CD4-positive, alpha-beta memory T cell (primary cell): ENCODE measurements at regions of chr19 and their contacts with region 1.

Region 1: GRCh38 chr19:35899547-35900214 is 659 bp downstream of the NFKBID start:
- DNase-seq: peak; percentile 86 to 94 (median 88)
- H3K4me3 ChIP-seq: peak overlapping the region; percentile 52 to 96
- H3K4me3 Mint-ChIP-seq: peak overlapping the region; percentile 94 to 100 (median 98)
- H3K27ac ChIP-seq: peak overlapping the region; percentile 100
- H3K27ac Mint-ChIP-seq: peak overlapping the region; percentile 92 to 99 (median 98)
- H3K4me1 ChIP-seq: peaks cover 67% of the 10 kb centered on the region
- H3K4me1 Mint-ChIP-seq: peaks cover 23 to 73% (median 53%) of the 10 kb centered on the region in 4 donors
- H3K27me3 ChIP-seq: no peaks in the 10 kb centered on the region
- H3K27me3 Mint-ChIP-seq: no peaks in the 10 kb centered on the region

Region 2: DNA sequence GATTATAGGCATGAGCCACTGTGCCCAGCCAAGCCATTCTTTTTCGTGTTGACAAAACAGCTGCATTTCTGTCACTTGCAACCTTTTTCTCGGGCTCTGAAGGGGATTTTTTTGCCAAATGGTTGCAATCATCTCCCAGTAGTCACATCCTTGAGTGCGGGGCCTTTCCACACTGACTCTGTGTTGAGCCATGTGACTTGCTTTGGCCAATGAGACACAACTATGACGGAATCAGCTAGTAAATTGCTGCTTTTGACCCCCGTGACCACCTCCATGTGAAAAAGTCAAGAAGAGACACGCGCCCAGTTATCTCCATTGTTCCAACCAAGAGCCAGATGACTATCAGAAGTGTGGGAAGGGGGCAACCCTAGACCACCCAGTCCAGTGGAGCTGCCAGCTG is 65.7 kb before region 1 on chr19:
- CTCF ChIA-PET with region 1: no interaction called
- POLR2A ChIA-PET with region 1: no interaction called
- intact Hi-C with region 1: no loop called
- DNase-seq: no peak
- H3K4me3 ChIP-seq: no peak overlapping the region
- H3K4me3 Mint-ChIP-seq: no peak overlapping the region
- H3K27ac ChIP-seq: no peak overlapping the region
- H3K27ac Mint-ChIP-seq: no peak overlapping the region
- H3K4me1 ChIP-seq: no peaks in the 10 kb centered on the region
- H3K4me1 Mint-ChIP-seq: no peaks in the 10 kb centered on the region
- H3K27me3 ChIP-seq: peaks cover 2% of the 10 kb centered on the region
- H3K27me3 Mint-ChIP-seq: peaks cover 19 to 24% of the 10 kb centered on the region in 2 donors

Region 3: DNA sequence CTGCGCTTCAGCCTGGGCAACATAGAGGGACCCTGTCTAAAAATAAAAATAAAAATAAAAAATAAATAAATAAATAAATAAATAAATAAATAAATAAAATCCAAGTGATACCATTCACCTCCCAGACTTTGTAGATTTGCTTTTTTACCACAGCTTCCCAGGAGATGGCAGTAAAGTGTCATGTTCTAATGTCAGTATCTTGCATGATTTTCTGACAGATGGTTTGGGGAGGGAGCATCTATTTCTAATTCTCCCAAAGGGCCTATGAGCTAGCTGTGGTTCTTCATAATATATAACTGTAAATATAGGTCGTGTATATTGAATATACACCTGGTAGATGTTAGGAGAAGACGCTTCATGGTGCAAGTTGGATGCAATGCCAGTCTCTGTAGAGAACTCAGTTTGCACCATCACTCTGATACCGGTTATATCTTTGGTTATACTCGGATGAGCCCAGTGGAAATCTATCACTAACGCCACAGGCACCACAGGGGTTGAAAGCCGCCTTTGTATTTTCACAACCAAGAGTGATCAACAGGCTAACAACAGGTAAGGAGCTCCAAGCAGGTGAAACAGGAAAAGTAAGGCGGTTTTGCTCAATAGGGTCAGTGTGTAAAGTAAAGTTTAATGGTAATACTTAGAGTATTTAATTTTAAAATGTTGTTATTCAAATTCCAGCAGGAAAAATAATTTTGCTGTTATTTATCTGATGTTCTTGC is 17.4 kb before region 1 on chr19:
- CTCF ChIA-PET with region 1: interaction called, 18 read pairs
- POLR2A ChIA-PET with region 1: interaction called, 28 read pairs
- intact Hi-C with region 1: loop called (anchors 1 kb)
- DNase-seq: peak; percentile 71 to 75 (median 72)
- H3K4me3 ChIP-seq: no peak overlapping the region
- H3K4me3 Mint-ChIP-seq: no peak overlapping the region
- H3K27ac ChIP-seq: no peak overlapping the region
- H3K27ac Mint-ChIP-seq: peak overlapping the region in 2 of 7 donors; percentile 57 to 72
- H3K4me1 ChIP-seq: peaks cover 13% of the 10 kb centered on the region
- H3K4me1 Mint-ChIP-seq: peaks cover 8 to 19% (median 9%) of the 10 kb centered on the region in 4 donors
- H3K27me3 ChIP-seq: peaks cover 14% of the 10 kb centered on the region
- H3K27me3 Mint-ChIP-seq: peaks cover 7 to 15% of the 10 kb centered on the region in 2 donors

Region 4: DNA sequence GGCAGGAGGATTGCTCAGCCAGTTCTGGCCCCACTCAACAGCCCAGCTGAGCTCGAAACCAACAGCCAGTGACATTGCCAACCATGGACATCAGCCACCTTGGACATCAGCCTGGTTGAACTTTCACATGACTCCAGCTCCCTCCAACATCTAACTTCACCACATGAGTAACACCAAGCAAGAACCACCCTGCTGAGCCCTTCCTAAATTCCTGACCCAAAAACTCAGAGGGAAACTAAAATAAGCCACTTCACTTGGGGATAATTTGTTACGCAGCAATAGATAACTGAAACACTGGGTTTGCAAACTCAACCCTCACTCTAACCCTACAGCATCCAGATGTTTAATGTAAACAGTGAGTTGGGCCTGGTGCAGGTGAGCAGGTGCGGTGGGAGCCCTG is 25.8 kb after region 1 on chr19:
- CTCF ChIA-PET with region 1: interaction called, 14 read pairs
- POLR2A ChIA-PET with region 1: interaction called, 73 read pairs
- intact Hi-C with region 1: no loop called
- DNase-seq: no peak
- H3K4me3 ChIP-seq: no peak overlapping the region
- H3K4me3 Mint-ChIP-seq: no peak overlapping the region
- H3K27ac ChIP-seq: no peak overlapping the region
- H3K27ac Mint-ChIP-seq: peak overlapping the region in 1 of 7 donors; percentile 32
- H3K4me1 ChIP-seq: peaks cover 22% of the 10 kb centered on the region
- H3K4me1 Mint-ChIP-seq: peaks cover 13 to 32% (median 18%) of the 10 kb centered on the region in 4 donors
- H3K27me3 ChIP-seq: no peaks in the 10 kb centered on the region
- H3K27me3 Mint-ChIP-seq: no peaks in the 10 kb centered on the region

Region 5: GRCh38 chr19:35931161-35931873 is 31.6 kb after region 1 on chr19:
- CTCF ChIA-PET with region 1: interaction called, 14 read pairs
- POLR2A ChIA-PET with region 1: interaction called, 73 read pairs
- intact Hi-C with region 1: loop called (anchors 1 kb)
- DNase-seq: peak; percentile 99 to 100 (median 100)
- H3K4me3 ChIP-seq: peak overlapping the region in 1 of 2 donors; percentile 49
- H3K4me3 Mint-ChIP-seq: peak overlapping the region; percentile 76 to 85 (median 80)
- H3K27ac ChIP-seq: peak overlapping the region; percentile 54
- H3K27ac Mint-ChIP-seq: peak overlapping the region; percentile 86 to 97 (median 95)
- H3K4me1 ChIP-seq: peaks cover 47% of the 10 kb centered on the region
- H3K4me1 Mint-ChIP-seq: peaks cover 27 to 62% (median 38%) of the 10 kb centered on the region in 4 donors
- H3K27me3 ChIP-seq: no peaks in the 10 kb centered on the region
- H3K27me3 Mint-ChIP-seq: no peaks in the 10 kb centered on the region

Region 6: GRCh38 chr19:35949131-35949530 is 49.5 kb after region 1 on chr19:
- CTCF ChIA-PET with region 1: no interaction called
- POLR2A ChIA-PET with region 1: interaction called, 14 read pairs
- intact Hi-C with region 1: no loop called
- DNase-seq: no peak
- H3K4me3 ChIP-seq: no peak overlapping the region
- H3K4me3 Mint-ChIP-seq: peak overlapping the region in 1 of 8 donors; percentile 39
- H3K27ac ChIP-seq: no peak overlapping the region
- H3K27ac Mint-ChIP-seq: peak overlapping the region in 6 of 7 donors; percentile 48 to 87 (median 78)
- H3K4me1 ChIP-seq: peaks cover 46% of the 10 kb centered on the region
- H3K4me1 Mint-ChIP-seq: peaks cover 39 to 77% (median 56%) of the 10 kb centered on the region in 4 donors
- H3K27me3 ChIP-seq: no peaks in the 10 kb centered on the region
- H3K27me3 Mint-ChIP-seq: no peaks in the 10 kb centered on the region